Left ventricle myocardium superior (tissue), 1 donor: ENCODE measurements at regions of chr15 and their contacts with region 1.

Region 1: GRCh38 chr15:71448688-71449114 is 333.4 kb downstream of the THSD4 start:
- DNase-seq: no peak
- ATAC-seq: peak; percentile 84

Region 2: DNA sequence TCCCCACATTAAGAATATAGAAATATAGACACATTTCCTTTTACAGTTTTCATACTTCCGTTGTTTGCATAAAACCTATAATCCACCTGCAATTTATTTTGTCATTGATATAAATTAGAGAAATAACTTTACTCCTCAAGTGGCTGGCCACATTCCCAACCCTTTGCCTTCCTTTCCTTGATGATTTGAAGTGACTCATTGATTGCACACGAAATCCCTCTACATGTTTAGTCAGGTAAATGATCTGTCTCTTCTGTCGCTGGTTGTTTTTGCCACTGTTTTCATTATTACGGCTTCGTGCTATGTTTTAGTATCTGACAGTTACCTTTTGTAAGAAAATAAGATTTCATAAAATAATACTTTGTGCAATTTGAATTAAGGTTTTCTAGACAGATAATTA is 89.5 kb after region 1 on chr15:
- intact Hi-C with region 1: no loop called
- DNase-seq: no peak
- ATAC-seq: no peak

Region 3: DNA sequence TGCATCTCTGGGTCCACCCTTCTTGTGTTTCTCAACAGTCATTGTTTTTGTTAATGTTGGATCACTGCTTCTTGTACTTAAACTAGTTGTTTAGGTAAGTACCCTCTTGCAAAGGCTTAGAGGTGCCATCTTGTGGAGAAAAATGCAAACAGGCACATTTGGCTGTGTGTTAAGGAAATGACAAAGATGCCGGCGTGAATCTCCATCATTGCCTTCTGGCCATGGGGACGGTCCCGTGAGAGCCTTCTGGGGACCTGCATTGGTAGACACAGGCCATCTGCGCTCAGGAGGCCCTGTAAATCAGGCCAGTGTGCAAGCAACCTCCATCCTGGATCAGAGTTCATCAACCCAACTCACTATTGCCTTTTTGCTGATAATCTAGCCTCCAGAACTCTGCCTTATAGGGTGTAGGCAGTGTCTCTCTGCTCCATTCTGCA is 203.1 kb after region 1 on chr15:
- intact Hi-C with region 1: loop called (anchors 5 kb)
- DNase-seq: no peak
- ATAC-seq: peak; percentile 45